Naive thymus-derived CD4-positive, alpha-beta T cell (primary cell): ENCODE measurements at regions of chr10 and their contacts with region 1.

Region 1: GRCh38 chr10:22676435-22676834 is 37.9 kb downstream of the PIP4K2A start:
- DNase-seq: no peak
- ATAC-seq: no peak
- H3K4me3 ChIP-seq: no peak overlapping the region
- H3K4me3 Mint-ChIP-seq: peak overlapping the region; percentile 8 to 80 (median 61)
- H3K27ac ChIP-seq: peak overlapping the region; percentile 25
- H3K27ac Mint-ChIP-seq: peak overlapping the region; percentile 7 to 95 (median 86)
- H3K4me1 ChIP-seq: peaks cover 78 to 89% of the 10 kb centered on the region in 2 donors
- H3K4me1 Mint-ChIP-seq: peaks cover 70 to 100% (median 96%) of the 10 kb centered on the region in 7 donors
- H3K27me3 ChIP-seq: no peaks in the 10 kb centered on the region
- H3K27me3 Mint-ChIP-seq: no peaks in the 10 kb centered on the region

Region 2: DNA sequence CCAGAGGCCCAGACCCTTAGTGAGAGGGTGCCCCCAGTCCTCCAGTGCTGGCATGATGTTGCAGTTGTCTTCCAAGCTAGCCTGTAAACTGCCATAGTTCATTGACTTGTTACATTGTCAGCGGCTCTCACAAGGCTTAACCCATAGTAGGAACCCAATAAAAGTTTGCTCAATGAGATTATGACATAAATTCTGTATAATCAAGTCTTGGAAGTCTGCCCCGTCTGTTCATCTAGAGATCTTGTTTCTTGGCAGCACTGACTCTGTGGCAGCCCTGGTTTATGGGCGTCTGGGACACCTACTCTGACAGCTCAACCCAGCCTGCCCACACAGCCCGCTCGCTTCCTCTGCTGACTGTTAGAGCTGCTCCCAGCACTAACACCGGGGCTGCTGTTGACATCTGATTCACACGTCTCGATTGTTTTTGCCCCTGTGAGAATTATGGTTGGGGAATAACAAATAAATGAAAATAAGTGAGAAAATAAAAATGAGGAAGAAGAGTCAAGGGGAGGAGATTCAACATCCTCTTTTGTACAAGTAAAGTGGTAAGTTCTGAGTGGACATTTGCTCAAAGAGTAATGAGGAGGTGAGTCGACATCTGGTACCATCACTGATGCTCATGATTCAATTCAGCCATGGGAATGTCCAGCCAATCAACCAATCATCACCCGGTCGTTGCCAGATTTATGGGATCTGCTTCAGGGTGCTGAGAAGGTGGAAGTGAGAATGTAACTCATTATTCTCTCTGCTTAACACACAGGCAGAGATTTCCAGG is 170.3 kb before region 1 on chr10:
- CTCF ChIA-PET with region 1: no interaction called
- POLR2A ChIA-PET with region 1: no interaction called
- intact Hi-C with region 1: no loop called
- DNase-seq: peak in 5 of 9 donors; percentile 13 to 46 (median 19)
- ATAC-seq: peak; percentile 94
- H3K4me3 ChIP-seq: no peak overlapping the region
- H3K4me3 Mint-ChIP-seq: peak overlapping the region in 7 of 10 donors; percentile 12 to 62 (median 42)
- H3K27ac ChIP-seq: no peak overlapping the region
- H3K27ac Mint-ChIP-seq: peak overlapping the region in 2 of 9 donors; percentile 18 to 50
- H3K4me1 ChIP-seq: peaks cover 0 to 17% of the 10 kb centered on the region in 2 donors
- H3K4me1 Mint-ChIP-seq: peaks cover 6 to 25% (median 14%) of the 10 kb centered on the region in 7 donors
- H3K27me3 ChIP-seq: no peaks in the 10 kb centered on the region
- H3K27me3 Mint-ChIP-seq: peaks cover 7 to 26% (median 17%) of the 10 kb centered on the region in 5 donors

Region 3: DNA sequence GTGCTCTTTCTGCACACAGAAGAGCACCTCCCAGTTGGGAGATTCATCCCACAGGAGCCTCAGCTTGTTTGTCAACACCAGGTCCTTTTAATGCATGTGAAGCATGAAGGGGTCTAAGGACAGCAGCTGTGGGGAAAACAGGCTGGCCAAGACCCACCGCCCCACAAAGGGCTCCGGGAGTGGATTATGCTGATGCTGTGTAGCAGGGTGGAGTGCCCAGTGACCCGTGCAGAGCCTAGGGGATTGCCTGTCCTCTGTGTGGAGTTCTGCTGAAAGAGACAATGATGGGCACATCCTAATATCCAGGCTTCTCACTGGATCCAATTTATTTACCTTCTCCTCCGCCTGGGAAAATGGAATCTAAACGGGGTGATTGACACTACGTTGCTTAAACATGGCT is 36.1 kb before region 1 on chr10:
- CTCF ChIA-PET with region 1: no interaction called
- POLR2A ChIA-PET with region 1: no interaction called
- intact Hi-C with region 1: no loop called
- DNase-seq: no peak
- ATAC-seq: no peak
- H3K4me3 ChIP-seq: no peak overlapping the region
- H3K4me3 Mint-ChIP-seq: no peak overlapping the region
- H3K27ac ChIP-seq: no peak overlapping the region
- H3K27ac Mint-ChIP-seq: peak overlapping the region in 3 of 9 donors; percentile 14 to 67 (median 48)
- H3K4me1 ChIP-seq: peaks cover 54 to 99% of the 10 kb centered on the region in 2 donors
- H3K4me1 Mint-ChIP-seq: peaks cover 62 to 95% (median 84%) of the 10 kb centered on the region in 7 donors
- H3K27me3 ChIP-seq: no peaks in the 10 kb centered on the region
- H3K27me3 Mint-ChIP-seq: no peaks in the 10 kb centered on the region

Region 4: DNA sequence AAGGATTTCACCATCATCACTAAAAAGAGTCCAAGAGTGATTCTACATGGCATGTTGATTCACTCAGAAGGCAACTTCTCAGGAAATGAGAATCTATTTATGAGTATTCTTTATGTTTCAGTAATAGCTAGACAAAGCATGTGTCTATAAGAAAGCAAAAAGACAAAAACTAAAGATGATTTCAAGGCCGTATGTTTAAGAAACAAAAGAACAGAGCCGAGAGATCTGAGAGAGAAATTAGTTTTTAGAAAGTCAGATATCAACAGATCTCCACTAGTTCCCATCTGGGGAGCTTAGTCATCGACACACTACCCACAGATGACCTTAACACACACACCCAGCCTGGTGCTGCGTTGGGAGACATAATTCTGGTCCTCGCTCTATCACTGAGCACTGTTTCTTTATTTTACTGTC is 16.9 kb after region 1 on chr10:
- CTCF ChIA-PET with region 1: interaction called, 3 read pairs
- POLR2A ChIA-PET with region 1: interaction called, 9 read pairs
- intact Hi-C with region 1: loop called in 1 of 2 experiments (anchors 2 kb)
- DNase-seq: no peak
- ATAC-seq: peak; percentile 82
- H3K4me3 ChIP-seq: no peak overlapping the region
- H3K4me3 Mint-ChIP-seq: peak overlapping the region in 8 of 10 donors; percentile 1 to 58 (median 41)
- H3K27ac ChIP-seq: no peak overlapping the region
- H3K27ac Mint-ChIP-seq: peak overlapping the region; percentile 21 to 95 (median 82)
- H3K4me1 ChIP-seq: peaks cover 54 to 86% of the 10 kb centered on the region in 2 donors
- H3K4me1 Mint-ChIP-seq: peaks cover 53 to 97% (median 94%) of the 10 kb centered on the region in 7 donors
- H3K27me3 ChIP-seq: no peaks in the 10 kb centered on the region
- H3K27me3 Mint-ChIP-seq: no peaks in the 10 kb centered on the region

Region 5: DNA sequence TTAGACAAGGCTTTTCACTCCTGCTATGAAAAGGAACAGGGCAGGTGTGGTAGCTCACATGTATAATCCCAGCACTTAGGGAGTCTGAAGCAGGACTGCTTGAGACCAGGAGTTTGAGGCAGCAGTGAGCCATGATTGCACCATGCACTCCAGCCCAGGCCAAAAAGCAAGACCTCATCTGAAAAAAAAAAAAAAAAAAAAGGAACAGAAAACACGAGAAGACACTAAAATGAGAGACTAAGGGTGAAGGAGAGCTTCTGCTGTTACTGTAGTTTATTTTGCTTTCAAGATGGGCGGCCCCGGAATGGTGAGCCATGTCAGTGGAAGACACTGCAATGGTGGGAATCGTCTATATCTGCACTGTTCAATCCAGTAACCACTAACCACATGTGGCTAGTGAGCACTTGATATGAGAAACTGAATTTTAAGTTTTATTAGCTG is 28.1 kb after region 1 on chr10:
- CTCF ChIA-PET with region 1: interaction called, 3 read pairs
- POLR2A ChIA-PET with region 1: interaction called, 10 read pairs
- intact Hi-C with region 1: no loop called
- DNase-seq: no peak
- ATAC-seq: peak; percentile 33
- H3K4me3 ChIP-seq: no peak overlapping the region
- H3K4me3 Mint-ChIP-seq: peak overlapping the region in 9 of 10 donors; percentile 14 to 70 (median 60)
- H3K27ac ChIP-seq: peak overlapping the region; percentile 30
- H3K27ac Mint-ChIP-seq: peak overlapping the region in 8 of 9 donors; percentile 29 to 92 (median 82)
- H3K4me1 ChIP-seq: peaks cover 59 to 93% of the 10 kb centered on the region in 2 donors
- H3K4me1 Mint-ChIP-seq: peaks cover 80 to 100% (median 99%) of the 10 kb centered on the region in 7 donors
- H3K27me3 ChIP-seq: no peaks in the 10 kb centered on the region
- H3K27me3 Mint-ChIP-seq: no peaks in the 10 kb centered on the region

Region 6: GRCh38 chr10:22754296-22754695 is 77.9 kb after region 1 on chr10:
- CTCF ChIA-PET with region 1: no interaction called
- POLR2A ChIA-PET with region 1: no interaction called
- intact Hi-C with region 1: no loop called
- DNase-seq: no peak
- ATAC-seq: no peak
- H3K4me3 ChIP-seq: no peak overlapping the region
- H3K4me3 Mint-ChIP-seq: no peak overlapping the region
- H3K27ac ChIP-seq: no peak overlapping the region
- H3K27ac Mint-ChIP-seq: no peak overlapping the region
- H3K4me1 ChIP-seq: no peaks in the 10 kb centered on the region
- H3K4me1 Mint-ChIP-seq: peaks cover 0 to 12% (median 2%) of the 10 kb centered on the region in 7 donors
- H3K27me3 ChIP-seq: no peaks in the 10 kb centered on the region
- H3K27me3 Mint-ChIP-seq: peaks cover 0 to 11% (median 0%) of the 10 kb centered on the region in 5 donors